ENCODE measurements at regions of chr17 and their contacts with region 1.

Region 1: GRCh38 chr17:81860756-81861518 is 602 bp upstream of the P4HB start:
- DNase-seq: peak; percentile 98 to 100 (median 99)
- ATAC-seq: peak; percentile 84 to 90 (median 86)
- H3K4me3 ChIP-seq: peak overlapping the region; percentile 67 to 71
- H3K4me3 Mint-ChIP-seq: peak overlapping the region; percentile 84 to 88 (median 85)
- H3K27ac ChIP-seq: peak overlapping the region; percentile 92
- H3K27ac Mint-ChIP-seq: peak overlapping the region; percentile 90 to 91
- H3K4me1 ChIP-seq: peaks cover 10 to 50% of the 10 kb centered on the region in 2 experiments
- H3K4me1 Mint-ChIP-seq: peaks cover 30 to 56% (median 46%) of the 10 kb centered on the region in 3 donors
- H3K27me3 ChIP-seq: no peaks in the 10 kb centered on the region
- H3K27me3 Mint-ChIP-seq: no peaks in the 10 kb centered on the region

Region 2: GRCh38 chr17:81568416-81568815 is 292.5 kb before region 1 on chr17:
- CTCF ChIA-PET with region 1: no interaction called
- POLR2A ChIA-PET with region 1: interaction called in 1 of 2 experiments, 14 read pairs
- DNase-seq: no peak
- ATAC-seq: no peak
- H3K4me3 ChIP-seq: no peak overlapping the region
- H3K4me3 Mint-ChIP-seq: no peak overlapping the region
- H3K27ac ChIP-seq: no peak overlapping the region
- H3K27ac Mint-ChIP-seq: no peak overlapping the region
- H3K4me1 ChIP-seq: peaks cover 0 to 3% of the 10 kb centered on the region in 2 experiments
- H3K4me1 Mint-ChIP-seq: no peaks in the 10 kb centered on the region
- H3K27me3 ChIP-seq: no peaks in the 10 kb centered on the region
- H3K27me3 Mint-ChIP-seq: no peaks in the 10 kb centered on the region

Region 3: DNA sequence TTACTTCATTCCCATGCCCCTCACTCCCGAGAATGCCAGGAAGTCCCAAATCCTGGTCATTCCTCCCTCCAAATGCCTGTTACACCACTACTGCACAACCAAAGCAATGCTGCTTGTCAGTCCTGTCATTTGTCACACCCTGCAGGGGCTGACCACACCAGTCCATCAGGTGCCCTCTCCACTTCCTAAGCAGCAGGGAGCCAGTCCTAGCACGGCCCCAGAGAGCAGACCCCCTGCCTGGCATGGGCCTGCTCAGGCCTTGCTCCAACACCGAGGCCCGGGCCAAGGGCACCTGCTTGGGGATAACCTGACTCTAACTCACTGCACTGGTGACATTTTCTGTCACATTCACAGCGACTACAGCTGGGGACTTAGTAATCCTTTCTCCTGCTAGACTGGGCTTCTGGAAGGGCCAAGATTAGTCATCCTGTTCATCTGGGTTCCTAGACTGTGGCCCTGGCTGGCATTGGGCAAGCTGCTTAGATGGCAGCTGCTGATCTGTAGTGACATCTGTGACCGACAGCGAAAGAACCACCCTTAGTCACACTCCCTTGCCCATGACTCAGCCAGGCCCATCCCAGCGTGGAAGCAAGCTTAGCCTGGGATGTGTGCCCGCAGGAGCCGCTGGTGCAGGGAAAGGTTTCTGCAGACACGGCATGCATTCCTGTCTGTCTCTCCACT is 25.1 kb after region 1 on chr17:
- CTCF ChIA-PET with region 1: no interaction called
- POLR2A ChIA-PET with region 1: no interaction called
- DNase-seq: no peak
- ATAC-seq: no peak
- H3K4me3 ChIP-seq: no peak overlapping the region
- H3K4me3 Mint-ChIP-seq: no peak overlapping the region
- H3K27ac ChIP-seq: no peak overlapping the region
- H3K27ac Mint-ChIP-seq: no peak overlapping the region
- H3K4me1 ChIP-seq: peaks cover 10 to 26% of the 10 kb centered on the region in 2 experiments
- H3K4me1 Mint-ChIP-seq: peaks cover 17 to 27% (median 20%) of the 10 kb centered on the region in 3 donors
- H3K27me3 ChIP-seq: no peaks in the 10 kb centered on the region
- H3K27me3 Mint-ChIP-seq: no peaks in the 10 kb centered on the region

Region 4: DNA sequence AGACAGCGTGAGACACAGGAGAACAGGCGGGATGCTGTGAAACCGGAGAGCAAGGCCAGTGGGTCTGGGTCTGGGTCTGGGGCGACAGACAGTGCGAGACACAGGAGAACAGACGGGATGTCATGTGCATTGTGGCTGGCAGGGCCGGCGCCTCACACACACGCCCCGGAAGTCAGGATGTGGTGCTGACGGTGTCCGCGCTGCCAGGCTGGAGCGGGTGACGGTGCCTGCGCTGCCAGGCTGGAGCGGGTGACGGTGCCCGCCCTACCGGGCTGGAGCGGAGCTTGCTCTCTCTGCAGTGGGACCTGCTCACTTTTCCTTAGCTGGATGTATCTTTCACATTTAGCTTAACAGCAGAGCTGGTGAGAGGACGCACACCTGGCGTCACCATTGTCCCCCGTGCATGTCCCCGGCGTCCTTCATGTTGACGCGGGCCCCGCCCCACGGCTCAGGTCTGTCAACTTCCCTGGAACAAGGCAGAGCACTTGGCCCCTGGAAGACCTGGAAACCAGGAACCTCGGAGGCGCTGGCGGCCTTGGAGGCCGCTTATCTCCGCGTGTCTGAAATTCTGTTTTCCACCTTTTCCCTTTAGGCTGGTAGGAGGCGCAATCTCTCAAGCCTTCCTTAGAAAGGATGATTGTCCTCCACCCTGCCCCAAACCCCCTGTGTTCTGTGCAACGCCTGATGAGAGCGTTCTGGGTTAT is 1021.9 kb after region 1 on chr17:
- CTCF ChIA-PET with region 1: no interaction called
- POLR2A ChIA-PET with region 1: interaction called in 1 of 2 experiments, 14 read pairs
- DNase-seq: peak; percentile 60 to 92 (median 83)
- ATAC-seq: peak; percentile 91 to 94 (median 94)
- H3K4me3 ChIP-seq: peak overlapping the region; percentile 42 to 49
- H3K4me3 Mint-ChIP-seq: peak overlapping the region; percentile 80 to 83 (median 82)
- H3K27ac ChIP-seq: peak overlapping the region; percentile 86
- H3K27ac Mint-ChIP-seq: peak overlapping the region; percentile 99
- H3K4me1 ChIP-seq: peaks cover 48 to 66% of the 10 kb centered on the region in 2 experiments
- H3K4me1 Mint-ChIP-seq: peaks cover 86 to 95% (median 92%) of the 10 kb centered on the region in 3 donors
- H3K27me3 ChIP-seq: no peaks in the 10 kb centered on the region
- H3K27me3 Mint-ChIP-seq: no peaks in the 10 kb centered on the region

Measured in T-cell (primary cell).